MCF 10A (cell line): ENCODE measurements at regions of chr17 and their contacts with region 1.

Region 1: DNA sequence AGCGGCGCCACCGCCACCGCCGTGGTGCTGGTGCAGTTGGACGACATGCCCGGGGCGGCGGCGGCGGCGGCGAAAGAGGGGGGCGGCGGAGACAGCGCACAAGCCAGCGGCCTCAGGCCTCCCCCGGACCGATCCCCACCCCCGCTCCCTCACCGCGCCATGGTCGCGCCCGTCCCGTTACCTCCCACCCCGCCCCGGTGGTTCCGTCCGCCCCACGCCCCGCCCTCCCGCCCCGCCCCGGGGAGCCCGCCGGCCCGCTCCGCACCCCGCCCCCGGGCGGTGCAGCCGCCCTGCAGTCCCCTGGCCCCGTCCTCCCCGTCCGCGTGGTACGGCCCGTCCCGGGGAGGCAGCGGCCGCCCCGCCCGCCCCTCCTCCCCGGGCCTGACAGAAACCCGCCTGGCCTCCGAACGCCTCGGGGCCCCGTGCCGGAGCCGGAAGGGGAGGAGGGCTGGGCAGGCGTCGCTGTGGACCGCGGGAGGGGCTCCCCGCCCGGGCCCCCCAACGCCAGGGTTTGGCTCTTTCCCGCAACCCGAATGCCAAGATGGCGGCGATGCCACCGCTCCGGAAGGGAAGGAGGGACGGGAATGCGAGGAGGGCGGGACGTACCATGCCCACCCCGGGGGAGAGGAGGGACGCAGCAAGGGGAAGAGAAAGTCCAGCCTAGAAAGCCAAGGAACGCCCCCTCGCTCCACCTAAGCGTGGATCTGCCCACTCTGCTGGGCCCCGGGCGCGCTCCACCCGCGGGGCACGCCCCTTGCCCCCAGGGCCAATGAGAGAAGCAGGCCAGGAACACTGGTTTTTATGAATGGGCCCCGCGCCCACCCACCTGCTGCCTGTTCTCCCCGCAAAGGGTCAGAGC is at the start of gene PIP4K2B:
- DNase-seq: peak; percentile 96
- H3K4me3 Mint-ChIP-seq: peak within 1 kb of the TSS; percentile 98
- H3K27ac Mint-ChIP-seq: peak within 1 kb of the TSS; percentile 66
- H3K4me1 Mint-ChIP-seq: peaks cover 36% of the 10 kb centered on the region
- H3K27me3 Mint-ChIP-seq: no peaks in the 10 kb centered on the region
- CTCF ChIP-seq: no peak
- total RNA-seq, gene PIP4K2B: 25.9 and 27.4 TPM in 2 replicates

Region 2: GRCh38 chr17:38752119-38752929 is 47.3 kb before region 1 on chr17 and contains the start of gene PSMB3:
- CTCF ChIA-PET with region 1: interaction called, 3 read pairs
- POLR2A ChIA-PET with region 1: interaction called, 34 read pairs
- intact Hi-C with region 1: no loop called
- DNase-seq: peak; percentile 99
- H3K4me3 Mint-ChIP-seq: peak within 1 kb of the TSS; percentile 96
- H3K27ac Mint-ChIP-seq: peak within 1 kb of the TSS; percentile 98
- H3K4me1 Mint-ChIP-seq: peaks cover 28% of the 10 kb centered on the region
- H3K27me3 Mint-ChIP-seq: no peaks in the 10 kb centered on the region
- CTCF ChIP-seq: no peak
- total RNA-seq, gene PSMB3: 124 and 145 TPM in 2 replicates

Region 3: GRCh38 chr17:38824899-38825761 is 25.5 kb after region 1 on chr17 and contains the start of gene CWC25:
- CTCF ChIA-PET with region 1: no interaction called
- POLR2A ChIA-PET with region 1: interaction called, 12 read pairs
- intact Hi-C with region 1: no loop called
- DNase-seq: peak; percentile 92
- H3K4me3 Mint-ChIP-seq: peak within 1 kb of the TSS; percentile 98
- H3K27ac Mint-ChIP-seq: peak within 1 kb of the TSS; percentile 100
- H3K4me1 Mint-ChIP-seq: no peaks in the 10 kb centered on the region
- H3K27me3 Mint-ChIP-seq: no peaks in the 10 kb centered on the region
- CTCF ChIP-seq: no peak
- total RNA-seq, gene CWC25: 21.9 and 23.4 TPM in 2 replicates